Psoas muscle (tissue), 8 donors: ENCODE measurements at regions of chr12 and their contacts with region 1.

Region 1: GRCh38 chr12:80472902-80473500 is 29.0 kb downstream of the PTPRQ start:
- DNase-seq: peak in 1 of 2 donors; percentile 43
- ATAC-seq: peak; percentile 67 to 93 (median 79)
- H3K4me3 ChIP-seq: no peak overlapping the region
- H3K27ac ChIP-seq: no peak overlapping the region
- H3K4me1 ChIP-seq: peaks cover 5% of the 10 kb centered on the region
- H3K27me3 ChIP-seq: no peaks in the 10 kb centered on the region
- CTCF ChIP-seq: peak; percentile 40

Region 2: DNA sequence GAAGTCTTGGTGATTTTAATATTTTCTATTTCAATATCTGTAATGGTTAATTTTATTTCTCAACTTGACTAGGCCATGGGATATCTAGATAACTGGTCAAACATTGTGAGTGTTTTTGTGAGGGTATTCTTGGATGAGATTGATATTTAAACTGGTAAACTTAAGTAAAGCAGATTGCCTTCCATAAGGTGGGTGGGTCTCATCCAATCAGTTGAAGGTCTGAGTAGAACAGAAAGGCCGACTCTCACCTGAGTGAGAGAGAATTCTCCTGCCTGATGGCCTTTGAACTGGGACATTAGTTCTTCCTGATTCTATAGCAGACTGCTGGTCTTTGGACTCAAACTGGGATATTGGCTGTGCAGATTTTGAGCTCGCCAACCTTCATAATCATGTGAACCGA is 337.4 kb before region 1 on chr12:
- intact Hi-C with region 1: no loop called
- DNase-seq: no peak
- ATAC-seq: no peak
- H3K4me3 ChIP-seq: no peak overlapping the region
- H3K27ac ChIP-seq: no peak overlapping the region
- H3K4me1 ChIP-seq: no peaks in the 10 kb centered on the region
- H3K27me3 ChIP-seq: no peaks in the 10 kb centered on the region
- CTCF ChIP-seq: no peak

Region 3: GRCh38 chr12:80432055-80432454 is 40.9 kb before region 1 on chr12:
- intact Hi-C with region 1: no loop called
- DNase-seq: no peak
- ATAC-seq: no peak
- H3K4me3 ChIP-seq: no peak overlapping the region
- H3K27ac ChIP-seq: no peak overlapping the region
- H3K4me1 ChIP-seq: no peaks in the 10 kb centered on the region
- H3K27me3 ChIP-seq: no peaks in the 10 kb centered on the region
- CTCF ChIP-seq: no peak

Region 4: DNA sequence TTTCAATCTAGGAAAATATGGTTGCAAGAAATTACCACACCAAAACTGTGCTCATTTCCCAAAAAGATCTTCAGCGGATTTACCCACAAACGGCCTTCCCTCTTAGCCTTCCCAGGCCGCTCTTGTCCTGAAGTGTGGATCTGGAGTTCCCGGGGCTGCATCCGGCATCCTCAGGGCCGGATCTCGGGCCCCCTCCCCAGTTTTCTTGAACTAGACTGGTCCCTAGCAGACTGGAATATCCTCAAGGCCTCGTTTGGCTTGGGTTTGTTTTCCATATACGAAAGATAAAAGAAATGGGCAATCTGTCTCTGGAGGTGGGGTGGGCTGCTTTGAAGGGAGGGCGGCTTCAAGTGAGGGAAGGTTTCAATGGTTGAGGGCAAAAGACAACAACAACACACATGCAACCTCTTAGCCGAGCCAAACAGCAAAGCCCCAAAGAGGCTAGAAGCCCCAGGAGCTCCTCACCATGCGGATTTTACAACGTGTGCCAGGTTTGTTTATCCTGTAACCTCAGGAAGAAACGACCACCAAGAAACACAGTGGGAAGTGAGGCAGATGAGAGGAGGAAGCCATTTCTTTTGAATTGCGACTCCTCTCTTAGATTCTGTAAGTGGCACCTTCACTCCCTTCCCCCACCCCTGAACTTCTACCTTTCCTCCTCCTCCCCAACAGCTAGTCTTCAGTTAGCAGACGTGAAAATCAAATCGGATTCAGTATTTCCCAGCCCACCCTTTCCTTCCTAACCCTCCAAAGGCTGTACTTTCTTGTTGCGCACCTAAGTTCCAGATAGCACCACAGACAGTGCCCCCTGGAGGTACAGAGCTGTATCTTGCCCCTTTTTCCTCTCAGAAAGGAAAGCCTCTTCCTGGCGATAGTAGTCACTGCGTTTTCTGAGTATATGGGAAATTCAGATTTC is 237.1 kb after region 1 on chr12:
- intact Hi-C with region 1: loop called (anchors 2 to 5 kb)
- DNase-seq: peak in 1 of 2 donors; percentile 40
- ATAC-seq: peak in 3 of 4 donors; percentile 54 to 56 (median 55)
- H3K4me3 ChIP-seq: peak overlapping the region; percentile 76
- H3K27ac ChIP-seq: peak overlapping the region; percentile 93
- H3K4me1 ChIP-seq: peaks cover 15% of the 10 kb centered on the region
- H3K27me3 ChIP-seq: no peaks in the 10 kb centered on the region
- CTCF ChIP-seq: peak; percentile 78

Region 5: DNA sequence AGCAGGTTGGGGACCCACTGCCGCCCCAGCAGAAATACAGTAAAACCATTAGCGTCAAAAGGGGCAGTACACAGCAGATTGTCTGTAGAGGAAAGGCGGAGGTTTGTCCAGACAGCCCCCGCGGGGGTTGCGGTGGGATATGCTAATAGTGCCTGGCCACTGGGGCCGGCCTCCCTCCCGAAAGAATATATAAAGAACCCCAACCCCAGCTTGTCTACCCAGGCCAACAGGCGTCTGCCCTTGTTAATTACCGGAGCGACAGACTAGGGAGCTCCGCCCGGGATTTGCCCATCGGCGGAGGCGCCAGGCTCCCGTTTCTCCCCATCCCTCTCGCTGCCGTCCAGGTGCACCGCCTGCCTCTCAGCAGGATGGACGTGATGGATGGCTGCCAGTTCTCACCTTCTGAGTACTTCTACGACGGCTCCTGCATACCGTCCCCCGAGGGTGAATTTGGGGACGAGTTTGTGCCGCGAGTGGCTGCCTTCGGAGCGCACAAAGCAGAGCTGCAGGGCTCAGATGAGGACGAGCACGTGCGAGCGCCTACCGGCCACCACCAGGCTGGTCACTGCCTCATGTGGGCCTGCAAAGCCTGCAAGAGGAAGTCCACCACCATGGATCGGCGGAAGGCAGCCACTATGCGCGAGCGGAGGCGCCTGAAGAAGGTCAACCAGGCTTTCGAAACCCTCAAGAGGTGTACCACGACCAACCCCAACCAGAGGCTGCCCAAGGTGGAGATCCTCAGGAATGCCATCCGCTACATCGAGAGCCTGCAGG is 243.9 kb after region 1 on chr12 and contains the start of gene MYF5:
- intact Hi-C with region 1: loop called (anchors 2 to 5 kb)
- DNase-seq: peak in 1 of 2 donors; percentile 44
- ATAC-seq: peak in 1 of 4 donors; percentile 17
- H3K4me3 ChIP-seq: peak within 1 kb of the TSS; percentile 26
- H3K27ac ChIP-seq: no peak within 1 kb of the TSS
- H3K4me1 ChIP-seq: peaks cover 15% of the 10 kb centered on the region
- H3K27me3 ChIP-seq: no peaks in the 10 kb centered on the region
- CTCF ChIP-seq: no peak
- total RNA-seq, gene MYF5: 2.3 to 4.7 (median 3.5) TPM

Region 6: DNA sequence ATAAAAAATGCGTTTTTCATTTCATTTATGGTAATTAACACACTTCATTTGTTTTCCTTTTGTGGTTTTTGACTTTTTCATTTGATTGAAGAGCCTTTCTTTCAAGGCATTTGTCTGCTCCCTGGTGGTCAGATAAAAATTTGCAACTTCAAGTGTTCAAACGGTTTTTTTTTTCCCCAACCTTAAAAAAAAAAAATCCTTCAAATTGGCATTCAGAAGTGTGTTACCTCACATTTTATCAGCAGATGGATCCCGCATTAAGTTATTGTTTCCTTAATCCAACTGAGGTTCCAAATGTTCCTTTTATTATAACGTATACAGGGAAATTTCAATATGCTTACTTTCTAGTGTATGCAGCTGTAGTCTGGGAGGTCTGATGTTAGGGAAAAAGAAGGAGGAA is 290.9 kb after region 1 on chr12:
- intact Hi-C with region 1: loop called (anchors 2 kb)
- DNase-seq: no peak
- ATAC-seq: peak in 1 of 4 donors; percentile 69
- H3K4me3 ChIP-seq: no peak overlapping the region
- H3K27ac ChIP-seq: no peak overlapping the region
- H3K4me1 ChIP-seq: peaks cover 3% of the 10 kb centered on the region
- H3K27me3 ChIP-seq: no peaks in the 10 kb centered on the region
- CTCF ChIP-seq: peak; percentile 72